Activated CD8-positive, alpha-beta T cell treated with anti-CD3 and anti-CD28 coated beads, Interleukin-2, amount 10 ng/mL, durations not matched to agents 7 days and 5 days (primary cell): ENCODE measurements at regions of chr20 and their contacts with region 1.

Region 1: GRCh38 chr20:59032023-59032712 is at the start of gene ATP5F1E:
- DNase-seq: peak; percentile 97
- ATAC-seq: peak; percentile 98
- H3K4me3 Mint-ChIP-seq: peak within 1 kb of the TSS; percentile 93
- H3K27ac Mint-ChIP-seq: peak within 1 kb of the TSS; percentile 95
- H3K4me1 Mint-ChIP-seq: peaks cover 55% of the 10 kb centered on the region
- H3K27me3 Mint-ChIP-seq: no peaks in the 10 kb centered on the region
- total RNA-seq, gene ATP5F1E: 97.8 to 98.8 TPM

Region 2: GRCh38 chr20:58839474-58839874 is 192.7 kb before region 1 on chr20:
- CTCF ChIA-PET with region 1: no interaction called
- POLR2A ChIA-PET with region 1: no interaction called
- DNase-seq: peak; percentile 61
- ATAC-seq: peak; percentile 71
- H3K4me3 Mint-ChIP-seq: no peak overlapping the region
- H3K27ac Mint-ChIP-seq: no peak overlapping the region
- H3K4me1 Mint-ChIP-seq: peaks cover 52% of the 10 kb centered on the region
- H3K27me3 Mint-ChIP-seq: peaks cover 67% of the 10 kb centered on the region

Region 3: DNA sequence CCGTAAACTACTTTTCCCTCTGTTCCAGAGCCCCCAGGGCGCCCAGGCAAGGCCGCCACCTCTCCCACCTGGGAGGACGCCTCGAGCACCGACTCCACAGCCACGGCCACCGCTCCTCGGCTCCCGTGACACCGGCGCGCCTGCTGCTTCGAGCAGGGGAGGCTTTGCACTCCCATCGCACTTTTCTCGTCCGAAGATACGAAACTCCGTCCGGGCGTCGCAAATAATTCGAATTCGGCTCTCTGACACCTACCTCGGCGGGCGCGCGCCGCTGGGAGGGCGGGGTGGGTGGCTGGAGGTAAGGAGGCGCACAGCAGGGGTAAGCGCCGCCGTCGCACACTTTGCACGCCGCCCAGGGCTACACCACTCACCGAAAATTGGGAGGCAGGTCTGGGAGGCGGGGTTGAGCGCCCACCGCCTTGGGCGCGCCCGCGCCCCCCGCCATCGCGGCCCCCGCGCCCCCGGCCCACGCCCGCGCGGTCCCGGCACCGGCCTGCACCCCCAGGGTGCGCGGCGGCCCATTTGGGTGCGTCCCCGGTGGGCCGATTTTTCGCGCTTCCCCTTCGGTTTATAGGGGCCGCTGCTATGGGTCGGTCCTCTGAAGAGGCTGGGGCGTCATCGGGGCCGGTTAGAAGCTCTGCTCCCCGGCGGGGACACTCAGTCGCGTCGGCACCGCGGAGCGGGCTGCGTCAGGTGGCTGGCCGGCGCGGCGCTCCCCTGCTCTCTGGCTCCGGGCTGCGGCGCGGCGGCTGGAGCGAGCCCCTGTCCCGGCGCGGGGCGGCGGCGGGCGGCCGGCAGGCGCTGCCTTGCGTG is 143.4 kb before region 1 on chr20:
- CTCF ChIA-PET with region 1: no interaction called
- POLR2A ChIA-PET with region 1: interaction called, 16 read pairs
- DNase-seq: peak; percentile 88
- ATAC-seq: peak; percentile 57
- H3K4me3 Mint-ChIP-seq: peak overlapping the region; percentile 83
- H3K27ac Mint-ChIP-seq: peak overlapping the region; percentile 84
- H3K4me1 Mint-ChIP-seq: peaks cover 37% of the 10 kb centered on the region
- H3K27me3 Mint-ChIP-seq: no peaks in the 10 kb centered on the region

Region 4: DNA sequence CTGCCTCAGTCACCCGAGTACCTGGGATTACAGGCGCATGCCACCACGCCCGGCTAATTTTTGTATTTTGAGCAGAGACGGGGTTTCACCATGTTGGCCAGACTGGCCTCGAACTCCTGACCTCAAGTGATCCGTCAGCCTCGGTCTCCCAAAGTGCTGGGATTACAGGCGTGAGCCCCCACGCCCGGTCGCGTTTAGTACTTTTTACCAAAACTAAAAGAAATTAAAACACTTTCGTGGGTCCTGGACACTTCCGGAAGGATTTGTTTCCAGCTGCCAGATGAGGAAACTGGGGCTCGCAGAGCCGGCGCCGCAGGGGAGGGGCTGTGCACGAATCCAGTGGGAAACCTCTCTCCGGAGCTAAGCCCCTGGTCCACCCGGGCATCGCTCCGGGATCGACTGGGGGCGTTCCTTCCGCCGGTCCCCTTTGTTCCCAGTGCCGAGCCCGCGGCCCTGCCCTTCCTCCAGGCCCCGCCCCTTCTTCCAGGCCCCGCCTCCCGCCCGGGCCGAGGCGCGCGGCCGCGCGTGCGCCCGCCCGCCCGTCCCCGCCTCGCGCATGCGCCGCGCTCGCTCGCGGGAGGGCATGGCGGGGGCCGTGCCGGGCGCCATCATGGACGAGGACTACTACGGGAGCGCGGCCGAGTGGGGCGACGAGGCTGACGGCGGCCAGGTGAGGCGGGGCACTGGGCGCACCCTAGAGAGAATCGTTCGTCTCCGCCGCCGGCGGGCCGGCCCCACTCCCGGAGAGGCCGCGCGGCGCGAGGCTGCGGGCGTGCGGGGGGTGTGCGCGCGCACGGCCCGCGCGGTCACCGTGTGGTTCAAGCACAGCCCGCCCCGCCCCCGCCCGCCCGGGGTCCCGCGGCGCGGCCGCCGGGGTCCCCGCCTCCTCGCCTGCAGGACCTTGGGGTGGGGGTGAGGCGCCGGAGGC is 51.2 kb before region 1 on chr20 and contains the start of gene NELFCD:
- CTCF ChIA-PET with region 1: interaction called, 3 read pairs
- POLR2A ChIA-PET with region 1: interaction called, 10 read pairs
- DNase-seq: peak; percentile 90
- ATAC-seq: peak; percentile 89
- H3K4me3 Mint-ChIP-seq: peak within 1 kb of the TSS; percentile 93
- H3K27ac Mint-ChIP-seq: peak within 1 kb of the TSS; percentile 87
- H3K4me1 Mint-ChIP-seq: peaks cover 26% of the 10 kb centered on the region
- H3K27me3 Mint-ChIP-seq: peaks cover 9% of the 10 kb centered on the region
- total RNA-seq, gene NELFCD: 89.0 to 89.5 TPM

Region 5: DNA sequence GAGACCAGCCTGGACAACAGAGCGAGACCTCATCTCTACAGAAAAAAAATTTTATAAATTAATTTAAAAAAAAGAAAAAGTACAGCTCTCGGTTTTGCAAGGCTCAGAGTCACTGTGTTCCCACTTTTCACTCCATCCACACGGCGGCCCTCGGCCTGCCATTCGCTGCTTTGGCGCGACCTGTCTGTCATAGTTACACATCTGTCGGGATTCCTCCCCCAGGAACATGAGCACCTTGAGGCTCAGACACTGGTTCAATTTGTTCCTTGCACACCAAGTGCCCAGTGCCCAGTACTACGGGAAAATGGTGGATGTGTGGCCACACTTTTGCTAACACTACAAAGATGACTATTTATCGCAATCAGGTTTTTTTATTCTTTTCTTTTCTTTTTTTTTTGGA is 33.5 kb before region 1 on chr20:
- CTCF ChIA-PET with region 1: no interaction called
- POLR2A ChIA-PET with region 1: interaction called, 10 read pairs
- DNase-seq: no peak
- ATAC-seq: no peak
- H3K4me3 Mint-ChIP-seq: no peak overlapping the region
- H3K27ac Mint-ChIP-seq: no peak overlapping the region
- H3K4me1 Mint-ChIP-seq: peaks cover 13% of the 10 kb centered on the region
- H3K27me3 Mint-ChIP-seq: no peaks in the 10 kb centered on the region

Region 6: GRCh38 chr20:59042796-59043660 is 10.9 kb after region 1 on chr20:
- CTCF ChIA-PET with region 1: interaction called, 18 read pairs
- POLR2A ChIA-PET with region 1: interaction called, 27 read pairs
- DNase-seq: peak; percentile 95
- ATAC-seq: peak; percentile 97
- H3K4me3 Mint-ChIP-seq: peak overlapping the region; percentile 91
- H3K27ac Mint-ChIP-seq: peak overlapping the region; percentile 96
- H3K4me1 Mint-ChIP-seq: peaks cover 50% of the 10 kb centered on the region
- H3K27me3 Mint-ChIP-seq: no peaks in the 10 kb centered on the region

Region 7: DNA sequence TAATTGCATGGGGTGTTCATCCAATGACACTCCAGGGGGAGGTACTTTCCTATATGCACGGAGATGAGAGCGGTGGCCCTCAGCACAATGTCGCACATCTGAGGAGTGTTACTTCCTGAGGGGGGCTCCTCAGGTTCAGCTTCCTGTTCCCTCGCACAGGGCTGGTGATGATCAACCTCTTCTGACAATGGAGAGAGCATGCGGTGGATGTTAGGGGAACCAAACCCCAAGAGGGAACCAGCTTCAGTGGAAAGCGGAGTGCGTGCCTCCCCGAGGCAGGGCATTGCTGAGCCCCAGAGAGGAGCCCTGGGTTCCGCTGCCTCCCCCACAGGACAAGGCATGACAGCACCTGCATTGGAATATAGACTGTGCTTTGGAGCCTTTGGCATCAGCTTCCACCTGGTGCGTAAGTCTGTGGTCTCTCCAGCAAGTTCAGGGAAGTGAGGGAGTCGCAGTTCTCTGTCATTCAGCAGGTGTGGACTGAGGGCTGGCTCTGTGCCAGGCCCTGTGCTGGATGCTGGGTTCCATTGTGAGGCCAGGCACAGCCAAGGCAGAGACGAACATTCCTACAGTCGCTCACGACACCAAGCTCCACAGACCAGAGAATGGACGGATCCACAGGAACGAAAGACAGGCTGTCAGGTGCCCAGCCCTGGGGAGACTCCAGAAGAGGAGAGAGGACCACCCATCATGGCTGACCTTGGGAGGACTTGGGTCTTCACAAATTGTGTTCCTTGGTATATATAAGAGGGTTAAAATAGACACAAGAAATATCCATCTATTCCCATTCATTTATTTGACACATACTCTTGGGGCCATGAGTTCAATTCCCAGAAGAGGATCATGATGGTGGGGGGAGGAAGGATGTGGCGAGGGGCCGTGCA is 127.6 kb after region 1 on chr20:
- CTCF ChIA-PET with region 1: interaction called, 4 read pairs
- POLR2A ChIA-PET with region 1: interaction called, 10 read pairs
- DNase-seq: peak; percentile 82
- ATAC-seq: peak; percentile 74
- H3K4me3 Mint-ChIP-seq: peak overlapping the region; percentile 89
- H3K27ac Mint-ChIP-seq: peak overlapping the region; percentile 97
- H3K4me1 Mint-ChIP-seq: peaks cover 67% of the 10 kb centered on the region
- H3K27me3 Mint-ChIP-seq: no peaks in the 10 kb centered on the region